MCF 10A (cell line): ENCODE measurements at regions of chr7 and their contacts with region 1.

Region 1: DNA sequence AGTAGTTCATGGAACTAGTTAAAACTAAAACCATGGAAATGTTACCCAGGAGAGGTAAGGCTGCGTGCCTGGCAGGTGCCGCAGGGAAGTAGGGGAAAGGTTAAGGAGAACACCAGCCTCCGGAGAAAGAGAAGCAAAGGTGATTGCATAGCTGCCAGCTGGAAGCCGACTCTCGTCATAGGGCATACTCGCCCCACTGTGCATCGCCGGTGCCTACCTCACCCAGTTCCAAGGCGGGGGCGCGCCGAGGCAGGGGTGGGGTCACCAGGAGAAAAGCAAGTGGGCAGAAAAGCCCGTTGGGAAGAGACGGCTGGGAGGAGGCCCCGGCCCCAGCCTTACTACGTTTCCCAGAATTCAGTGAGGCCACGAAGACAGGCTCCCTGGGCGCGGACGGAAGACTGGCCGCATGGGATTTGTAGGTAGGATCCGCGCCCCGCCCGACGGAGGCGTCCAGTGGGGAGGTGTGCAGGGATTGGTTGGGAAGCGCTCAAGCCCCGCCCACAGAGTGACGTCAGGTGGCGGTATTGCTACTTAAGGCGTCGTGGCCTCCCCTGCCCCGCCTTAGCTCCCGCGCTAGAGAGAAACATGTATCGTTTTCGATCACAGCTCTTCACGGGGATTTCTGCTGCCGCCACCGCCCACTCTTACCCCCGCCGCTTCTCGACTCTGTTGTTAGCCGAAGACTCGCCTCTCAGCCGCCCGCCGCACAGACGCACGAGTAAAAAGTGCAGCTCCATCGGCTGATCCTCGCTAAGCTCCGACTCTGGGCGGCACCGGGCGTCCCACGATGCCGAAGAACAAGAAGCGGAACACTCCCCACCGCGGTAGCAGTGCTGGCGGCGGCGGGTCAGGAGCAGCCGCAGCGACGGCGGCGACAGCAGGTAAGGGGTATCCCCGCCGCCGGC is at the start of gene IFRD1:
- DNase-seq: peak; percentile 99
- H3K4me3 Mint-ChIP-seq: peak within 1 kb of the TSS; percentile 97
- H3K27ac Mint-ChIP-seq: peak within 1 kb of the TSS; percentile 97
- H3K4me1 Mint-ChIP-seq: peaks cover 26% of the 10 kb centered on the region
- H3K27me3 Mint-ChIP-seq: no peaks in the 10 kb centered on the region
- CTCF ChIP-seq: no peak
- total RNA-seq, gene IFRD1: 116 and 123 TPM in 2 replicates

Region 2: GRCh38 chr7:111741811-111742240 is 708.3 kb before region 1 on chr7:
- CTCF ChIA-PET with region 1: interaction called, 12 read pairs
- POLR2A ChIA-PET with region 1: no interaction called
- intact Hi-C with region 1: no loop called
- DNase-seq: peak; percentile 78
- H3K4me3 Mint-ChIP-seq: no peak overlapping the region
- H3K27ac Mint-ChIP-seq: no peak overlapping the region
- H3K4me1 Mint-ChIP-seq: no peaks in the 10 kb centered on the region
- H3K27me3 Mint-ChIP-seq: no peaks in the 10 kb centered on the region
- CTCF ChIP-seq: peak; percentile 64

Region 3: GRCh38 chr7:112414855-112415490 is 35.2 kb before region 1 on chr7:
- CTCF ChIA-PET with region 1: interaction called, 15 read pairs
- POLR2A ChIA-PET with region 1: interaction called, 255 read pairs
- intact Hi-C with region 1: loop called (anchors 1 kb)
- DNase-seq: peak; percentile 64
- H3K4me3 Mint-ChIP-seq: no peak overlapping the region
- H3K27ac Mint-ChIP-seq: no peak overlapping the region
- H3K4me1 Mint-ChIP-seq: peaks cover 9% of the 10 kb centered on the region
- H3K27me3 Mint-ChIP-seq: no peaks in the 10 kb centered on the region
- CTCF ChIP-seq: peak; percentile 54

Region 4: DNA sequence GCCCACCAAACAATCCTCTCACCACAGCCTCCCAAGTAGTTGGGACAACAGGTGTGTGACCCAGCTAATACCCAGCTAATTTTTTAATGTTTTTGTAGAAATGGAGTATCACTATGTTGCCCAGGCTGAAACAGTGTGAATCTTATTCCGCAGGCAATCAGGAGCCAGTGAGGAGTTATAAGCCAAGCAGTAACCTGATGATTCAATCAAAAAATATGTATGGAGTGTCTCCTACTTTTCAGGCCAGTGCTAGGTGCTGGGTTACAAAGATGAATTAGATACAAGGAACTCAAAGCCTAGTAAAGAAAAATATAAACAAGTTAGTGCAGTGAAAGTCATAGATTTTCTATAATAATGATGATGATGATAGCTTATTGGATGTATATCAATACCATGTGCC is 13.1 kb before region 1 on chr7:
- CTCF ChIA-PET with region 1: interaction called, 5 read pairs
- POLR2A ChIA-PET with region 1: interaction called, 48 read pairs
- intact Hi-C with region 1: no loop called
- DNase-seq: no peak
- H3K4me3 Mint-ChIP-seq: no peak overlapping the region
- H3K27ac Mint-ChIP-seq: no peak overlapping the region
- H3K4me1 Mint-ChIP-seq: peaks cover 9% of the 10 kb centered on the region
- H3K27me3 Mint-ChIP-seq: no peaks in the 10 kb centered on the region
- CTCF ChIP-seq: no peak

Region 5: GRCh38 chr7:112481833-112482670 is 31.9 kb after region 1 on chr7:
- CTCF ChIA-PET with region 1: interaction called, 3 read pairs
- POLR2A ChIA-PET with region 1: interaction called, 55 read pairs
- intact Hi-C with region 1: no loop called
- DNase-seq: peak; percentile 93
- H3K4me3 Mint-ChIP-seq: no peak overlapping the region
- H3K27ac Mint-ChIP-seq: no peak overlapping the region
- H3K4me1 Mint-ChIP-seq: peaks cover 19% of the 10 kb centered on the region
- H3K27me3 Mint-ChIP-seq: no peaks in the 10 kb centered on the region
- CTCF ChIP-seq: no peak

Region 6: DNA sequence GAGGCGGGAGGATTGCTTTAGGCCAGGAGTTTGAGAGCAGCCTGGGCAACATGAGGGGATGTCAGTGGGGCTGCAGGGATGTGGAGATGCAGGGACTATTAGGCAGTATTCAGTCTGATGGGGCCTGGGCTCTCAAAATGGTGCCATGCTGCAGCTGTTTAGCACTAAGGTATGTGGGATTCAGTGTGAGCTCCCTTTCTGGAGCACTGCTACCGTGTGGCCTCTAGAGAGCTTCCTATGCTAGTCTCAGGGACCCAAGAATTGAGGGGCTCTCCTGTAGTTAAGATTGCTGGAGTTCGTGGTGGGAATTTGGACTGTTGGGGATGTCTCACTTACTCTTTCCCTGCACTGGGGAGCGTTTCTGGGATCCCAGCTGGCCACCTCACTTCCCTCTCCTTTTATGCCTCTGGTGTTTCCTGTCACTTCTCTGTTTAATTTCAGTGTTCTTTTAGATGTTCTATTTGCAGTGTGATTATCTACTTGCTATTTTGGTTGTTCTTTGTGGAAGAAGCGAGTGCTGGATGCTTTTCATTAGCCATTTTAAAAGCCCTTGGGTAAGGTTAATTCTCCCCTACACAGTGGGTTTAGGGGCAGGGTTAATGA is 54.0 kb after region 1 on chr7:
- CTCF ChIA-PET with region 1: no interaction called
- POLR2A ChIA-PET with region 1: no interaction called
- intact Hi-C with region 1: no loop called
- DNase-seq: no peak
- H3K4me3 Mint-ChIP-seq: no peak overlapping the region
- H3K27ac Mint-ChIP-seq: no peak overlapping the region
- H3K4me1 Mint-ChIP-seq: no peaks in the 10 kb centered on the region
- H3K27me3 Mint-ChIP-seq: no peaks in the 10 kb centered on the region
- CTCF ChIP-seq: no peak

Region 7: DNA sequence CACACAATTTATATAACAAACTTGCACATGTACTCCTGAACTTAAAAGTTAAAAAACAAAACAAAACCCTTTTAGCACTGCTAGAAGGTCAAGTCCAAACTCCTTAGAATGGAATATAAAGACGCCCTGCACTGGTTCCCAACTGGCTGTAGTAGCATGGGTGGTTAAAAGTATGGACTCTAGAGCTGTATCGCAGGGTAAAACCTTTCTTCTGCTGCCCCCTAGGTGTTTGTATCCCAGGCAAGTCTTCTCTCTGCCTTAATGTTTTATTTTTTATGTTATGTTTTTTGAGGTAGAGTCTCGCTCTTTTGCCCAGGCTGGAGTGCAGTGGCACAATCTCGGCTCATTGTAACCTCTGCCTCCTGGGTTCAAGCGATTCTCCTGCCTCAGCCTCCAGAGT is 65.8 kb after region 1 on chr7:
- CTCF ChIA-PET with region 1: no interaction called
- POLR2A ChIA-PET with region 1: no interaction called
- intact Hi-C with region 1: no loop called
- DNase-seq: no peak
- H3K4me3 Mint-ChIP-seq: no peak overlapping the region
- H3K27ac Mint-ChIP-seq: no peak overlapping the region
- H3K4me1 Mint-ChIP-seq: peaks cover 6% of the 10 kb centered on the region
- H3K27me3 Mint-ChIP-seq: peaks cover 41% of the 10 kb centered on the region
- CTCF ChIP-seq: no peak

Region 8: DNA sequence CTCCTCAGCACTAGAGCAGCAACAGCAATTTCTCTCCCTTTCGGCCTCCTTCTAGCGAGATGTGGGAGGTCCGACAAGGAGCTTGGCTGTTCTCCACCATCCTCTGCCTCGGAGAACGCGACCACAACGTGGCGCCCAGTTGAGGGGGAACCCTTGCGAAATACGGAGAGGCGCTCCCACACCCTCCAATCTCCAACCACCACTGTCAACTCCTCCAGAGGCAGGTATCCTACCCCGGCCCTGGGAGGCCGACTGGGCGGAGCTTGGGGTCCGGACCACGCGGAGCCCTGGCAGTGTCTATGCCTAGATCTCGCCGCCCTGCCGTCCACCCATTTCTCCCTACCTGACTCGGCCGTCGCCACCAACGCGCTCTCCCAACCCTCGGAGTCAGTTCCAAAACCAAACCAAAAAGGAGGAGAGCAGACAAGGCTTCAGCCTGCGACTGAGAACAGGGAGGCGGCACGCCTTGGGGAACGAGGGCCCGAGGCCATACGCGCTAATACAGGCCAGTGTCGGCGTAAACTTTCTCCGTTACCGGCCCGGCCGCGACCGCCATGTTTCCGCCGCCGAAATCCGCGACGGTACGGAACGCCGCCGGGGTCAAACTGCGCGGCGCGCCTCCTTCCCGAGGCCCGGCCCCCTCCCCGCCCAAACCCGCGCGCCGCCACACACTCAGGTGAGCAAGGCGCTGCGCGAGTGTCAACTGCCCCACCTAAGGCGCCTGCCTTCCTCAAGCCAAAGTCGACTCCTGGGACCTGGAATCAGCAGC is 339.8 kb after region 1 on chr7 and contains the start of gene TMEM168:
- CTCF ChIA-PET with region 1: no interaction called
- POLR2A ChIA-PET with region 1: interaction called, 12 read pairs
- intact Hi-C with region 1: no loop called
- DNase-seq: peak; percentile 88
- H3K4me3 Mint-ChIP-seq: peak within 1 kb of the TSS; percentile 83
- H3K27ac Mint-ChIP-seq: peak within 1 kb of the TSS; percentile 83
- H3K4me1 Mint-ChIP-seq: peaks cover 33% of the 10 kb centered on the region
- H3K27me3 Mint-ChIP-seq: no peaks in the 10 kb centered on the region
- CTCF ChIP-seq: no peak
- total RNA-seq, gene TMEM168: 29.5 and 32.5 TPM in 2 replicates